ENCODE measurements at regions of chr10 and their contacts with region 1.

Region 1: GRCh38 chr10:12710594-12711349 is 290.7 kb downstream of the CCDC3 start:
- DNase-seq: peak; percentile 19
- H3K4me3 ChIP-seq: no peak overlapping the region
- H3K27ac ChIP-seq: peak overlapping the region in 3 of 4 donors; percentile 47 to 66 (median 63)
- H3K4me1 ChIP-seq: peaks cover 32 to 54% (median 46%) of the 10 kb centered on the region in 3 donors
- H3K27me3 ChIP-seq: no peaks in the 10 kb centered on the region
- CTCF ChIP-seq: peak; percentile 73 to 95 (median 91)
- POLR2A ChIP-seq: no peak

Region 2: GRCh38 chr10:12264204-12264940 is 446.4 kb before region 1 on chr10:
- intact Hi-C with region 1: loop called (anchors 5 kb)
- DNase-seq: peak; percentile 32
- H3K4me3 ChIP-seq: peak overlapping the region; percentile 13 to 64 (median 40)
- H3K27ac ChIP-seq: peak overlapping the region; percentile 37 to 77 (median 64)
- H3K4me1 ChIP-seq: peaks cover 3 to 25% (median 10%) of the 10 kb centered on the region in 3 donors
- H3K27me3 ChIP-seq: no peaks in the 10 kb centered on the region
- CTCF ChIP-seq: peak; percentile 64 to 91 (median 84)
- POLR2A ChIP-seq: no peak

Region 3: GRCh38 chr10:12579954-12580858 is 130.6 kb before region 1 on chr10:
- intact Hi-C with region 1: no loop called
- DNase-seq: no peak
- H3K4me3 ChIP-seq: no peak overlapping the region
- H3K27ac ChIP-seq: peak overlapping the region in 2 of 4 donors; percentile 19 to 36
- H3K4me1 ChIP-seq: peaks cover 0 to 17% (median 0%) of the 10 kb centered on the region in 3 donors
- H3K27me3 ChIP-seq: no peaks in the 10 kb centered on the region
- CTCF ChIP-seq: no peak
- POLR2A ChIP-seq: no peak

Region 4: GRCh38 chr10:12902135-12902572 is 191.4 kb after region 1 on chr10:
- intact Hi-C with region 1: loop called (anchors 10 kb)
- DNase-seq: no peak
- H3K4me3 ChIP-seq: no peak overlapping the region
- H3K27ac ChIP-seq: no peak overlapping the region
- H3K4me1 ChIP-seq: peaks cover 0 to 24% (median 7%) of the 10 kb centered on the region in 3 donors
- H3K27me3 ChIP-seq: peaks cover 0 to 5% (median 0%) of the 10 kb centered on the region in 4 donors
- CTCF ChIP-seq: peak; percentile 44 to 77 (median 66)
- POLR2A ChIP-seq: no peak

Region 5: GRCh38 chr10:13062803-13063202 is 352.0 kb after region 1 on chr10:
- intact Hi-C with region 1: loop called (anchors 10 kb)
- DNase-seq: no peak
- H3K4me3 ChIP-seq: no peak overlapping the region
- H3K27ac ChIP-seq: no peak overlapping the region
- H3K4me1 ChIP-seq: no peaks in the 10 kb centered on the region
- H3K27me3 ChIP-seq: peaks cover 0 to 12% (median 0%) of the 10 kb centered on the region in 4 donors
- CTCF ChIP-seq: no peak
- POLR2A ChIP-seq: no peak